HEK293 (cell line): ENCODE measurements at regions of chr7 and their contacts with region 1.

Region 1: GRCh38 chr7:77651573-77652162 is 44.6 kb upstream of the RSBN1L start:
- H3K4me3 ChIP-seq: no peak overlapping the region
- H3K27ac ChIP-seq: no peak overlapping the region
- H3K4me1 ChIP-seq: no peaks in the 10 kb centered on the region
- CTCF ChIP-seq: no peak

Region 2: DNA sequence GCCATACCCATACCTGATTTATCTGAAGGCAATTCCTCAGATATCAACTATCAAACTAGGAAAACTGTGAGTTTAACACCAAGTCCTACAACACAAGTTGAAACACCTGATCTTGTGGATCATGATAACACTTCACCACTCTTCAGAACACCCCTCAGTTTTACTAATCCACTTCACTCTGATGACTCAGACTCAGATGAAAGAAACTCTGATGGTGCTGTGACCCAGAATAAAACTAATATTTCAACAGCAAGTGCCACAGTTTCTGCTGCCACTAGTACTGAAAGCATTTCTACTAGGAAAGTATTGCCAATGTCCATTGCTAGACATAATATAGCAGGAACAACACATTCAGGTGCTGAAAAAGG is 24.4 kb before region 1 on chr7:
- CTCF ChIA-PET with region 1: interaction called, 16 read pairs
- POLR2A ChIA-PET with region 1: no interaction called
- H3K4me3 ChIP-seq: no peak overlapping the region
- H3K27ac ChIP-seq: no peak overlapping the region
- H3K4me1 ChIP-seq: no peaks in the 10 kb centered on the region
- CTCF ChIP-seq: no peak

Region 3: GRCh38 chr7:77759294-77759889 is 107.7 kb after region 1 on chr7:
- CTCF ChIA-PET with region 1: interaction called, 49 read pairs
- POLR2A ChIA-PET with region 1: no interaction called
- H3K4me3 ChIP-seq: no peak overlapping the region
- H3K27ac ChIP-seq: no peak overlapping the region
- H3K4me1 ChIP-seq: peaks cover 5% of the 10 kb centered on the region; the same call in 1 of the 2 replicates
- CTCF ChIP-seq: peak; percentile 11; the same call in 1 of the 2 replicates

Region 4: GRCh38 chr7:77935652-77936348 is 284.1 kb after region 1 on chr7:
- CTCF ChIA-PET with region 1: interaction called, 13 read pairs
- POLR2A ChIA-PET with region 1: no interaction called
- H3K4me3 ChIP-seq: no peak overlapping the region
- H3K27ac ChIP-seq: no peak overlapping the region
- H3K4me1 ChIP-seq: peaks cover 2% of the 10 kb centered on the region; the same call in 1 of the 2 replicates
- CTCF ChIP-seq: no peak